Activated naive CD4-positive, alpha-beta T cell treated with anti-CD3 and anti-CD28 coated beads for 36 hours (primary cell): ENCODE measurements at regions of chr6 and their contacts with region 1.

Region 1: GRCh38 chr6:104789770-104790190 is 69.9 kb downstream of the HACE1 start:
- DNase-seq: peak; percentile 49
- H3K4me3 Mint-ChIP-seq: peak overlapping the region; percentile 59
- H3K27ac Mint-ChIP-seq: peak overlapping the region; percentile 90
- H3K4me1 Mint-ChIP-seq: peaks cover 28% of the 10 kb centered on the region
- H3K27me3 Mint-ChIP-seq: no peaks in the 10 kb centered on the region

Region 2: DNA sequence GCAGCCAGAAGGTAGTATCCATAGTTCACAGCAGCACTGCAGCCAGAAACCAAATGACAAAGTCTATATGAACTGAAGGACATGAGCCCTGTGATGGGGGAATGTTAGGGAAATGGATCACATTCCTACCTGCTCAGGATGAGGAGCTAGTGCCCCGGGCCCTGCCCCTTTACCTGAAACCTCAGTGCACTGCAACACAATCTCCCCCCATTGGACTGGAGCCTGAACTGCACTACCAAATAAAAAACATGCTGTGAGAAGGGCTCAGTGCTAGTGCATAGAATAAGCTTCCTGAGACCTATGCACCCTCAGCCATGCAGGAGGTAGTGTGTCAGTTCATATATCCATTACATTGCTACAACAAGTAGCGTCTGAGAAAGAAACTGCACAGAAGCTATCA is 407.9 kb before region 1 on chr6:
- CTCF ChIA-PET with region 1: no interaction called
- intact Hi-C with region 1: no loop called
- DNase-seq: no peak
- H3K4me3 Mint-ChIP-seq: no peak overlapping the region
- H3K27ac Mint-ChIP-seq: no peak overlapping the region
- H3K4me1 Mint-ChIP-seq: no peaks in the 10 kb centered on the region
- H3K27me3 Mint-ChIP-seq: no peaks in the 10 kb centered on the region

Region 3: DNA sequence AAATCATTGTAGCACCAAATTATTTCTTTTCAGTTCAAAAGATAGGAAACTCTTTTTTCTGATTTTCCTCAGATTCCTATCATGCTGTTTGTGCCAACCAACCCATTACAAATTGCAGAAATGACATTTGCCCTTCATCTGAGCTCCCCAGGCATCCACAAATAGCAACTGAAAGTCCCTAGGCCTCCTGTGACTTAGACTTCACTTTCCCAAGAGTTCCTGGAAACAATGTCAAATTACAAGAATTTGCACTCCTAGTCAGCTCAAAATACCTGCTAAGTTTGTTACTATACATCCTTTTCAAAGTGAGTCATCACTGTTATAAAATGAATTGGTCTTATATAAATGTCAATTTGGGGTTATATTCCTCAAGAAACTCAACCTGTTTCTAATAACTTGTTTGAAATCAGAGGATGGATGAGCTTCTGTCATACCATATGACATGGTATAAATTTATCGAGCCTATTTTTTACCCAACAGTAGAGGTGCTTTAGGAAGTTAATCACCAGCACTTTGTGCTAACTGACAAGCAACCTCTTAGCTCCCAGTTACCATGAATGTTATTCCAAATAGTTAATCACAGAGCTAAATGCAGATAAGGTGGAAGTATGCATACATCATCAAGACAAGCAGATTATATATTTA is 186.6 kb before region 1 on chr6:
- CTCF ChIA-PET with region 1: no interaction called
- intact Hi-C with region 1: loop called (anchors 1 kb)
- DNase-seq: no peak
- H3K4me3 Mint-ChIP-seq: no peak overlapping the region
- H3K27ac Mint-ChIP-seq: no peak overlapping the region
- H3K4me1 Mint-ChIP-seq: peaks cover 15% of the 10 kb centered on the region
- H3K27me3 Mint-ChIP-seq: no peaks in the 10 kb centered on the region

Region 4: GRCh38 chr6:104814743-104815142 is 25.0 kb after region 1 on chr6:
- CTCF ChIA-PET with region 1: no interaction called
- intact Hi-C with region 1: loop called (anchors 2 kb)
- DNase-seq: peak; percentile 9
- H3K4me3 Mint-ChIP-seq: no peak overlapping the region
- H3K27ac Mint-ChIP-seq: no peak overlapping the region
- H3K4me1 Mint-ChIP-seq: peaks cover 13% of the 10 kb centered on the region
- H3K27me3 Mint-ChIP-seq: no peaks in the 10 kb centered on the region

Region 5: DNA sequence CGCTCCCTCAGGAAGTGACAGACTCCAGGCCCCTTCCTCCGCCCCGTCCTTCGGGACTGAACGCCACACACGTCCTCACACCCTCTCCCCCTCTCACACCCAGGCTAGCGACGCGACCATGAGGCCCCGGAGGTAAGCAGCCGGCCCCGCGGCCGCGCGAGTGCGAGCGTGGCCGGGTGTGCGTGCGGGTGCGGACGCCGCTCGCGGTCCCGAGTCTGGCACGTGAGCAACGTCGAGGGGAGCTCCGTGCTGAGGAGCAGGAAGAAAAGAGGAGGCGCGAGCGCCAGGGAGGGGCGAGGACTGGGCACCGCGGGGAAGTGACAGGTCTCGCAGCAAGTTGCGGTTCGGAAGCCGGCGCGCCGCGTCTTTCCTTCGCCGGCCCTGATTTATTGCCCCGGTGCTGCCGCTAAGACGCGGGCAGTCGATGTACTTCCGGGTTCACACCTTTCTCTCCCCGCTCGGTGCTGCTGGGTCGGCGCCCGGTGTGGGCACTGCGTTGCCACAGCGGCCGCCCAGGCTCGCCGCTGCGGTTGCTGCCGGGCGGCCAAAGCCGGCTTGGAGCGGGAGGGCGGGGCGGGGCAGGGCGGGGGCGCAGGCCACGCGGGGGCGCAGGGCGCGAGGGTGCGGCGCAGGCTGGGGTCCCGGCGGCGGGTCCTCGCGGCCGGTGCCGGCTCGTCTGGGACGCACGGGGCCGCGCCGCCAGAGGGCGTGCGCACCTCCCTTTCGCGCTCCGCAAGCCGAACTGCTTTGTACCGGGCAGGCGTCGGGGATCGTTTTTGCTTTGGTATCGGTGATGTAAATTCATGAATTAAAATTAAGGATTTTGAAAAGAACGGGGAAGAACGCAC is 151.3 kb after region 1 on chr6:
- CTCF ChIA-PET with region 1: no interaction called
- intact Hi-C with region 1: loop called (anchors 1 kb)
- DNase-seq: peak; percentile 45
- H3K4me3 Mint-ChIP-seq: peak overlapping the region; percentile 65
- H3K27ac Mint-ChIP-seq: no peak overlapping the region
- H3K4me1 Mint-ChIP-seq: peaks cover 5% of the 10 kb centered on the region
- H3K27me3 Mint-ChIP-seq: peaks cover 43% of the 10 kb centered on the region

Region 6: DNA sequence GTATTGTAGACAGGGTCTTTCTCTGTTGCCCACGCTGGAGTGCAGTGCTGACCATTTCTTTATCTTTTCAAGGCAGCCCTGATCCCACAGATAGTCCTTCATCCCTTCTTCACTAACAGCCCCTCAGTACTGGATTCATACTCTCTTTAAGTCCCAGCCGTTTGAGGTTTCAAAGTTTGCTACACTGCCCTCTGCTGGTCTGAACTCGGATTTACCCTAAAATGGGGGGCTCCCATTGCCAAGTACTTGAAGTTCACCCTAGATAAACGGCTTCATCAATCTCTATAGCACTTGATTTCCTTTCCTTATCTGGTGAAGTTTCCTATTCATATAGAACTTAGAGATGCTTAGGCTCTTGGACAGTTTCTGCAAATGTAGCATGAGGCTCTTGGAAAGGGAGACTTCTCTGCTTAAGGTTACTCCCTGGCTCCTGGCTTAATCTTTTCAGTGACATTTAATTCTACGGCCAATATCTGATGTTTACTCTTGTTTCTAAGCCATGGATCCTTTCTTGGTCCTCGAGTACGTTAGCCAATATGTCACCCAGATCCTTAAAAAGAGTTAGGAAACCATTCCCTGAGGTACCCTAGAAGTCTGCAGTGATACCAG is 634.5 kb after region 1 on chr6:
- CTCF ChIA-PET with region 1: no interaction called
- intact Hi-C with region 1: loop called (anchors 1 kb)
- DNase-seq: peak; percentile 74
- H3K4me3 Mint-ChIP-seq: no peak overlapping the region
- H3K27ac Mint-ChIP-seq: no peak overlapping the region
- H3K4me1 Mint-ChIP-seq: no peaks in the 10 kb centered on the region
- H3K27me3 Mint-ChIP-seq: peaks cover 3% of the 10 kb centered on the region